ENCODE measurements at regions of chr3 and their contacts with region 1.

Region 1: DNA sequence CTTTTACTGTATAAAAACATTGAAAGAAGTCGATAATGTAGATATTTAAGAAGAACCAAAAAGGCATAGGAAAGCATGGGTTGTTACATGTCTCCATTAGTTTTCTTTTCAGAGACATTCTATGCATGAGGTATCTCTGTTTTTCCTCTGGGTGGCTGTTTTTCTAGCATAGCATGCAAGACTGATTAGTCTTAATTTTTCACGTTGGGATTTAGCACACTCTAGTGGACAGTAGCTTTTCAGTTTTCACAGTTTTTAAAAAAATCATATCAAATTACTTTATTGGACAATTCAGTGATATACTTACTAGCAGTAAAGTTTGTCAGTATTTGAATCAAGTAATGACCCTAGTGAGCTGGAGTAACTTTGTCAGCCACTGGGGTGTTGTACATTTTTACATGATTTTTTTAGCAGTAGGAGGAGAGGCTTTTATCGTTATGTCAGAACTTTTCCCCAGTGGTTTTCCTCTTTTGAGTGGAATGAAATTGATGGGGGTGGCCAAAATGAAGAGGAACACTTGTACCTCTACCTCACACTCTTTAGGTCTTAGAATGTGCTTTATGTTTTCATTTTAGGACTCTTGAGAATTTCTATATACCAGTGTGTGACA is 57.2 kb downstream of the SEC22A start:
- DNase-seq: no peak
- ATAC-seq: no peak
- H3K4me3 ChIP-seq: no peak overlapping the region
- H3K27ac ChIP-seq: no peak overlapping the region
- H3K4me1 ChIP-seq: no peaks in the 10 kb centered on the region
- H3K27me3 ChIP-seq: no peaks in the 10 kb centered on the region

Region 2: DNA sequence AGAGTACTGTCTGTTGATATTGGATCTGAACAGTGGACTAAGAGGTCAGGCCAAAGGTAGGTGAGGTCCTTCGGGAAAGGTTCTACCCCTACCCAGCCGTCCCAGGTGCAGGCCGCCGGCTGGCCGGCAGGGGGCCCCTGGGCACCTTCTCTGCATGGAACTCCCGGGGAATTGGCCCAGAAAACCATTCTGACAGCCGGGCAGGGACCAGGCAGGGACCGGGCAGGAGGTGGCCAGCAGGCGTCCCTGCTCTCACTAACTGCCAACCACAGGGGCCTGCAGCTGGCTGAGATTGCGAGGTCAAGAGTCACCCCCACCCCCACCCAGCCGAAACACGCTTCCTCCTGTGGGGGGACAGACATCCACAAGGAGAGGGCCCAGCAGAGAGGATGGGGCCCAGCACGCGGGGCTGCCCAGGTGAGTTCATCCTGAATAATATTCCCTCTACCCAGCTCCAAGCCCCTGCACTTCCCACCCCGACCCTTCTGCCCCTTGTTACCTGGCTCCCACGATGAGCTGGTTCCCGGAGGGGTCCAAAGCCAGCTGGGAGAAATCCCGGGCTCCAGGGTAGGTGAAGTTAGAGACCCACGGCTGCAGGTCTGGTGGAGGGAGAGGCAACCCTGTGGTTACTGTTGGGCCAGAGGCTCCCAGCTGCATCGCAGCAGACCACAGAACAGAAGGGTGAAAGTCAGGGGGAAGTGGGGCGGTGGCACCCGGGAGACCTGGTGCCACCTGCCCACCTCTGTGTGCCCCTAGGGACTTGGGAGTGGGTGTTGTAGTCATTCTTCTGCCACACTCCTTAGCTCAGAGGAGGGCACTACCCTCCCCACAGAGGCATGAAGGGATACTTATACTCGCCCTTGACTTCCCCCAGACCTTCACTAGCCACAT is 315.7 kb before region 1 on chr3:
- intact Hi-C with region 1: loop called (anchors 2 kb)
- DNase-seq: peak; percentile 82 to 90
- ATAC-seq: peak; percentile 88
- H3K4me3 ChIP-seq: no peak overlapping the region
- H3K27ac ChIP-seq: no peak overlapping the region
- H3K4me1 ChIP-seq: no peaks in the 10 kb centered on the region
- H3K27me3 ChIP-seq: no peaks in the 10 kb centered on the region

Region 3: DNA sequence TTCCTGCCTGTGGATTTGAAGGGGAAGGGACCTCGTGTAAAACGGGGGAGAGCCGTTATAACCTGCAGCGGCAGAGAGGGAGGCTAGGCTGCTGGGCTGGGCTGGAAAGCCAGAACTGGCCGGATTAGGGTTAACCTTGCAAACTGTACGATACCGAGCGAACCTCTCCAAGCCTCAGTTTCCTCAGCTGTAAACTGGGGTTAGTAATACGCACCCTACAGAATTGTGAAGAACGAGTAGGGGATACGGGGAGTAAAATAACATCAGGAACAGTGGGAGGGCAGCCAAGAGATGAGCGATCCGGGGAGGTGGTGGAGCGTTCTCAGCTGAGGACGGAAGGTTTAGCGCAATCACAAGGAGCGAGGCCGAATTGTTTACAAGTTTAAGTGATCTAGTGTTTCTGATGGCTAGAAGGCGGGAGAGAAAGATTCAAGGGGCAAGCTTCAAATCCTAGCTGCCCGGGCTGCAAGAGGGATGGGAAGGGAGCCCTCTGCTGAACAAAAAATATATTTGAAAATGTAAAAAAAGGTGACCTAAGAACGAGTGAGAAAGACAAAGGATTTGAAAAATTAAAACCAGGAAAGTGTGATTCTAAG is 230.6 kb before region 1 on chr3:
- intact Hi-C with region 1: loop called (anchors 5 to 10 kb)
- DNase-seq: no peak
- ATAC-seq: peak; percentile 77
- H3K4me3 ChIP-seq: peak overlapping the region; percentile 40 to 65
- H3K27ac ChIP-seq: no peak overlapping the region
- H3K4me1 ChIP-seq: no peaks in the 10 kb centered on the region
- H3K27me3 ChIP-seq: no peaks in the 10 kb centered on the region

Region 4: GRCh38 chr3:123036352-123037014 is 222.4 kb before region 1 on chr3:
- intact Hi-C with region 1: loop called in 1 of 2 experiments (anchors 10 kb)
- DNase-seq: no peak
- ATAC-seq: peak; percentile 83
- H3K4me3 ChIP-seq: no peak overlapping the region
- H3K27ac ChIP-seq: no peak overlapping the region
- H3K4me1 ChIP-seq: peaks cover 0 to 4% of the 10 kb centered on the region in 2 donors
- H3K27me3 ChIP-seq: no peaks in the 10 kb centered on the region